ENCODE measurements at regions of chrX and their contacts with region 1.

Region 1: DNA sequence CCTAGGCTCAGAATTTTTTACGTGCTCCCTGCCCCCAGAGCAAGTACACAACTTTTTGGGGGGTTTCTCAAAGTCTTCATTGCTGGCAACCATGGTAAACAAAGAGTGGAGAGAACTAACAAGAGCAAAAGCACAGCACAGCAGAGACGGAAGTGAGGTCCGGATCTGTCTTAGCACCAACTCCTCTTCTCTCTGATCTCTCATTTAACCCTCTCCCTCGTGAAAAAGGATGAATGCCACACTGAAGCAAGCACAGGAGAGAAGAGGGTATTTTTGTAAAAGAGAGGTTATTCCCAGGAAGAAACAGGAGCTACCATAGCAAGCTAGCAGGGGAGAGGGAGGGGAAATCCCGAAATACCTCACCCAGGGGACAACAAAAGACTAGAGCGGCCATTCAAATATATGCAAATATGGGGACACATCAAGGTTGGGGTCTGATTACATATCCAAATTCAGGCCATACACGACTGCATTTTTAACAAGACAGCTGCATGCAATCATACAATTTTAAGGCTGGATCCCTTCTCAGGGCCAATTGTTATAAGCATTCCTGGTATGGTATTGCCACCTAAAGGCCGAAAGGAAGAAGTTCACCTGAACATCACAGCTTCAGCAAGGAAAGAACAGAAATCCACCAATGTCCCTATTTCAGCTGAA is 46.6 kb downstream of the CD40LG start:
- DNase-seq: peak; percentile 64 to 74 (median 65)
- H3K4me3 ChIP-seq: peak overlapping the region in 1 of 2 donors; percentile 27
- H3K4me3 Mint-ChIP-seq: peak overlapping the region; percentile 74 to 93 (median 84)
- H3K27ac ChIP-seq: peak overlapping the region; percentile 83
- H3K27ac Mint-ChIP-seq: peak overlapping the region; percentile 94 to 100 (median 98)
- H3K4me1 ChIP-seq: peaks cover 81% of the 10 kb centered on the region
- H3K4me1 Mint-ChIP-seq: peaks cover 37 to 80% (median 59%) of the 10 kb centered on the region in 4 donors
- H3K27me3 ChIP-seq: no peaks in the 10 kb centered on the region
- H3K27me3 Mint-ChIP-seq: no peaks in the 10 kb centered on the region

Region 2: DNA sequence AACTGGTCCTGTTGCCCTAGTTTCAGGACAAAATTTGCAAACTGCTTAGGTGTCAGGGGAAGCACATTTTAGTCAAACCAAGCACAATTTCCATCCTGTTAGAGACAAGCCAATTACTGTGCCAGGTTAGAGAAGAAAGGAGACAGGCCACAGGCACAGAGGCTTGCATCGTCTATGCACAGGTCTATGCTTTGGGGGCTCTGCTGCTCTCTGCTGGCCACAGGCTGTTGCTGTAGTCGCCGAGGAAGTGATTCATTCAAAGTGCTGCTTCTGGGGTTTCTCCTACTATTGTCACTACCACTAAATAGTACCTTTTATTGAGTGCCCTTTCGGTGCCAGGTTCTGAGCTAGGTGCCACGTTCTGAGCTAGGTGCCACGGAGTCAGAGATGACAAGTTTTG is 117.0 kb before region 1 on chrX:
- CTCF ChIA-PET with region 1: interaction called, 19 read pairs
- POLR2A ChIA-PET with region 1: interaction called, 7 read pairs
- intact Hi-C with region 1: loop called (anchors 1 kb)
- DNase-seq: peak; percentile 67 to 77 (median 72)
- H3K4me3 ChIP-seq: no peak overlapping the region
- H3K4me3 Mint-ChIP-seq: peak overlapping the region in 5 of 8 donors; percentile 31 to 58 (median 44)
- H3K27ac ChIP-seq: peak overlapping the region; percentile 38
- H3K27ac Mint-ChIP-seq: peak overlapping the region; percentile 59 to 93 (median 89)
- H3K4me1 ChIP-seq: peaks cover 25% of the 10 kb centered on the region
- H3K4me1 Mint-ChIP-seq: peaks cover 10 to 33% (median 17%) of the 10 kb centered on the region in 4 donors
- H3K27me3 ChIP-seq: no peaks in the 10 kb centered on the region
- H3K27me3 Mint-ChIP-seq: no peaks in the 10 kb centered on the region

Region 3: GRCh38 chrX:136626237-136626636 is 68.3 kb before region 1 on chrX:
- CTCF ChIA-PET with region 1: interaction called, 6 read pairs
- POLR2A ChIA-PET with region 1: interaction called, 20 read pairs
- intact Hi-C with region 1: no loop called
- DNase-seq: no peak
- H3K4me3 ChIP-seq: no peak overlapping the region
- H3K4me3 Mint-ChIP-seq: peak overlapping the region in 7 of 8 donors; percentile 15 to 82 (median 24)
- H3K27ac ChIP-seq: no peak overlapping the region
- H3K27ac Mint-ChIP-seq: peak overlapping the region in 6 of 7 donors; percentile 32 to 94 (median 76)
- H3K4me1 ChIP-seq: peaks cover 90% of the 10 kb centered on the region
- H3K4me1 Mint-ChIP-seq: peaks cover 59 to 91% (median 77%) of the 10 kb centered on the region in 4 donors
- H3K27me3 ChIP-seq: no peaks in the 10 kb centered on the region
- H3K27me3 Mint-ChIP-seq: no peaks in the 10 kb centered on the region

Region 4: DNA sequence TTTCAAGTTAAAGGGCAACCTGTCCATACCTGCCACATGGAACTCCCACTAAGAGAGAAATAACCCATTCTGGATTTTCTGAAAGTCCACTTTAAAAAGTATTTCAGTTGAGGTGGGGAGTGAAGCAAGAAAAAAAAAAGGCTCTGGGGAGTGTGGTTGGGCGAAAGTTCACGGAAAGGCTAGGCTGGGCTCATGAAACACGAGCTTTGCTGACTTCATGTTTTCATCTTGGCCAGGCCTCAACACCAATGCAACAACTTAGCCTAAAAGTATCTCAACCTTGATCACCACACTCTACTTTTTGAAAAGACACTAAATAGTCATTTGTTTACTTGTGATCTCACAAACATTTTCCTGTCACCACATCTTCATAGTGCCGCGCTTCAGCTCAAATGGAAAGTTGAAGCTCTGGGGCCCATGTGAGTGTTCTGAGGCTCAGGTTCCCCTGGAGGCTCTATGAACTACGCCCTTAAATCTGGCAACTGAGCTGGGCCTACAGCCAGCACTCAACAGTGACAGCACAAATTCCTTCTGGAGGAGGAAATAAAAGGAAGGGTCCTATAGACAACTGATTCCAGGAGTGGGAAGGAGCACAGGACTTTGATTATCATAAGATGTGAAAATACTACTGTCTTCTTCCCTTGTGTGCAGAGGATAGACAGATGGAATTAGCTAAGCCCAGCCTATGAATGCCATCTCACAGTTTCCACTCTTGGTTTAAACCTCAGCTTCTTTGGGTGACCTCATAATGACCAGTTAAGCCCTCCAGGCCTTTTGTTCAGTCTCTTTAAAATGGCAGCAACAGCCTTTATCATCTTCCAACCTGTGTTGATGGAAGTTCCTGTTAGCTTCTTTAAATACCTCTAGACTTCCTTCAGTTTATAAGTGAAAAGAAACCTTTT is 41.5 kb before region 1 on chrX:
- CTCF ChIA-PET with region 1: interaction called, 25 read pairs
- POLR2A ChIA-PET with region 1: interaction called, 77 read pairs
- intact Hi-C with region 1: loop called (anchors 2 kb)
- DNase-seq: peak in 1 of 5 donors; percentile 62
- H3K4me3 ChIP-seq: peak overlapping the region; percentile 84
- H3K4me3 Mint-ChIP-seq: peak overlapping the region; percentile 89 to 99 (median 97)
- H3K27ac ChIP-seq: peak overlapping the region; percentile 82
- H3K27ac Mint-ChIP-seq: peak overlapping the region; percentile 66 to 95 (median 90)
- H3K4me1 ChIP-seq: peaks cover 55% of the 10 kb centered on the region
- H3K4me1 Mint-ChIP-seq: peaks cover 27 to 70% (median 38%) of the 10 kb centered on the region in 4 donors
- H3K27me3 ChIP-seq: no peaks in the 10 kb centered on the region
- H3K27me3 Mint-ChIP-seq: no peaks in the 10 kb centered on the region

Region 5: DNA sequence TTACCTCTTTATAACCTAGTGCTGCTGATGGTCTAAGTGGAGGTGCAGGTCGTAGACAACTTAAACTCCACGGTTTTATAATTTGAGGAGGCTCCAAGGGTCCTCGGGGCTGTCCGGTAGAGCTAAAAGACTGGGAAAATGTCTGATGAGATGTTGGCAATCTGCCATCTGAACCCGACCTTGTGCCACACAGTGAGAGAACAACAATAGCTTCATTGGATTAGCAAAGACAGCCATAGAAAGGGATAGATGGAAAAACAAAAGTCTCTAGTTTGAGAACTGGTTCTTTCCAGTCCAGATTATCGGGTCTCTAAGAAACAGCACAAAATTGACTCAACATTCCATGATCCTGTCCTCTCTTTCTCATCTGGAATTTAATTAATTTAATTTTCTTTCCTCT is 15.0 kb before region 1 on chrX:
- CTCF ChIA-PET with region 1: interaction called, 7 read pairs
- POLR2A ChIA-PET with region 1: interaction called, 37 read pairs
- intact Hi-C with region 1: loop called (anchors 1 kb)
- DNase-seq: no peak
- H3K4me3 ChIP-seq: no peak overlapping the region
- H3K4me3 Mint-ChIP-seq: peak overlapping the region in 1 of 8 donors; percentile 43
- H3K27ac ChIP-seq: no peak overlapping the region
- H3K27ac Mint-ChIP-seq: peak overlapping the region in 6 of 7 donors; percentile 7 to 93 (median 63)
- H3K4me1 ChIP-seq: peaks cover 73% of the 10 kb centered on the region
- H3K4me1 Mint-ChIP-seq: peaks cover 35 to 62% (median 40%) of the 10 kb centered on the region in 4 donors
- H3K27me3 ChIP-seq: no peaks in the 10 kb centered on the region
- H3K27me3 Mint-ChIP-seq: no peaks in the 10 kb centered on the region

Region 6: GRCh38 chrX:136920001-136920400 is 225.4 kb after region 1 on chrX:
- CTCF ChIA-PET with region 1: interaction called, 7 read pairs
- POLR2A ChIA-PET with region 1: no interaction called
- intact Hi-C with region 1: loop called (anchors 1 kb)
- DNase-seq: no peak
- H3K4me3 ChIP-seq: no peak overlapping the region
- H3K4me3 Mint-ChIP-seq: no peak overlapping the region
- H3K27ac ChIP-seq: no peak overlapping the region
- H3K27ac Mint-ChIP-seq: no peak overlapping the region
- H3K4me1 ChIP-seq: peaks cover 3% of the 10 kb centered on the region
- H3K4me1 Mint-ChIP-seq: peaks cover 1 to 3% (median 2%) of the 10 kb centered on the region in 4 donors
- H3K27me3 ChIP-seq: no peaks in the 10 kb centered on the region
- H3K27me3 Mint-ChIP-seq: no peaks in the 10 kb centered on the region

Measured in CD4-positive, alpha-beta memory T cell (primary cell).